Naive thymus-derived CD4-positive, alpha-beta T cell (primary cell): ENCODE measurements at regions of chr7 and their contacts with region 1.

Region 1: DNA sequence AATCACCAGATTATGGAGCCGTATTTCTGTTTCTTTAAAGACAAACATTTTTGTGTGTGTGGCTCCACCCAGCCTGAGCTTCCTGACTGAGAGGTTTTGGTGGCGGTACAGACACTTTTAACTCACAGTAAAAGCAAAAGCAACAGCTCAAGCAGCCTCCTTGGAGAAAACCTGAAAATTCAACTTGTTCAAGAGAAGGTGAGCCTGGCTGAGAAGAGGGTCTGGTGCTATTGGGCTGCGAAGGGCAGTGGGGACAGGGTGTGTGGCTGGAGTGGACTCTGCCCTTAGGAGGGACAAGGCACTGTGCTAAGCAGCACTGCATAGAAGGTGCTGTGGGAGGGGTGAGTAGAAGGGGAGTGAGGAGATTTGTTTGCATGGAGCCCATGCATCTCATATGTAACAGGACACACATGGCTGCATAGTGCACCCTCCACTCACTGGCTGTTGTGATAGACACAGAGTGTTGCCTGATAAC is at the start of gene GIMAP7:
- DNase-seq: peak; percentile 38 to 90 (median 82)
- ATAC-seq: peak; percentile 86
- H3K4me3 ChIP-seq: peak within 1 kb of the TSS; percentile 94
- H3K4me3 Mint-ChIP-seq: peak within 1 kb of the TSS; percentile 93 to 100 (median 99)
- H3K27ac ChIP-seq: peak within 1 kb of the TSS; percentile 84
- H3K27ac Mint-ChIP-seq: peak within 1 kb of the TSS; percentile 94 to 99 (median 98)
- H3K4me1 ChIP-seq: peaks cover 45% of the 10 kb centered on the region in 2 donors
- H3K4me1 Mint-ChIP-seq: peaks cover 38 to 48% (median 46%) of the 10 kb centered on the region in 7 donors
- H3K27me3 ChIP-seq: no peaks in the 10 kb centered on the region
- H3K27me3 Mint-ChIP-seq: no peaks in the 10 kb centered on the region
- total RNA-seq, gene GIMAP7: 66.3 to 555 (median 321) TPM

Region 2: GRCh38 chr7:150368096-150368883 is 146.5 kb before region 1 on chr7 and contains the start of gene REPIN1:
- CTCF ChIA-PET with region 1: no interaction called
- POLR2A ChIA-PET with region 1: interaction called, 13 read pairs
- intact Hi-C with region 1: no loop called
- DNase-seq: peak; percentile 65 to 88 (median 80)
- ATAC-seq: peak; percentile 74
- H3K4me3 ChIP-seq: peak within 1 kb of the TSS; percentile 99
- H3K4me3 Mint-ChIP-seq: peak within 1 kb of the TSS; percentile 91 to 97 (median 95)
- H3K27ac ChIP-seq: peak within 1 kb of the TSS; percentile 83
- H3K27ac Mint-ChIP-seq: peak within 1 kb of the TSS; percentile 88 to 97 (median 95)
- H3K4me1 ChIP-seq: peaks cover 11 to 39% of the 10 kb centered on the region in 2 donors
- H3K4me1 Mint-ChIP-seq: peaks cover 24 to 67% (median 58%) of the 10 kb centered on the region in 7 donors
- H3K27me3 ChIP-seq: no peaks in the 10 kb centered on the region
- H3K27me3 Mint-ChIP-seq: no peaks in the 10 kb centered on the region
- total RNA-seq, gene REPIN1: 68.5 to 103 (median 79.7) TPM

Region 3: DNA sequence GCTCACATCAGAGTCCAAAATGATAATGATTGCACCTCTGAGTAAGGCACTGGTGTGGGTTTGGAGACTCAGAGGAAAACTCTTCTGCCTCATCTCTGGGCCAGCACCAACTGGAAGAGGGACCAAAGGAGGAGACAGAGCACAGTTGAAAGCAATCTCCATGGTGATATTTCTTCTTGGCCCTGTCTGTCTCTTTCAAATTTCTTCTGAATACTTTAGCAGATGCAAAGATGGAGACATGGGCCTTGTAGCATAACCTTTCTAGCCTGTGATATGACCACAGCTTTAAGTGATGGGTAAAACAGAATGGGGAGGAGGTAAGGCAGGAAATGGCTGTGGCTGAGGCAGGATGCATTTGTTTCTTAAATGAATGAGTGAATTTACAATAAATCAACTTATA is 12.3 kb before region 1 on chr7:
- CTCF ChIA-PET with region 1: interaction called, 9 read pairs
- POLR2A ChIA-PET with region 1: interaction called, 199 read pairs
- intact Hi-C with region 1: loop called (anchors 1 kb)
- DNase-seq: peak in 7 of 9 donors; percentile 54 to 80 (median 71)
- ATAC-seq: peak; percentile 95
- H3K4me3 ChIP-seq: peak overlapping the region; percentile 15
- H3K4me3 Mint-ChIP-seq: peak overlapping the region; percentile 55 to 93 (median 70)
- H3K27ac ChIP-seq: peak overlapping the region; percentile 71
- H3K27ac Mint-ChIP-seq: peak overlapping the region; percentile 90 to 98 (median 94)
- H3K4me1 ChIP-seq: peaks cover 34 to 46% of the 10 kb centered on the region in 2 donors
- H3K4me1 Mint-ChIP-seq: peaks cover 38 to 98% (median 93%) of the 10 kb centered on the region in 7 donors
- H3K27me3 ChIP-seq: no peaks in the 10 kb centered on the region
- H3K27me3 Mint-ChIP-seq: no peaks in the 10 kb centered on the region

Region 4: GRCh38 chr7:150675714-150676113 is 160.9 kb after region 1 on chr7:
- CTCF ChIA-PET with region 1: no interaction called
- POLR2A ChIA-PET with region 1: interaction called, 21 read pairs
- intact Hi-C with region 1: loop called in 1 of 2 experiments (anchors 2 kb)
- DNase-seq: no peak
- ATAC-seq: no peak
- H3K4me3 ChIP-seq: no peak overlapping the region
- H3K4me3 Mint-ChIP-seq: peak overlapping the region in 9 of 10 donors; percentile 34 to 93 (median 76)
- H3K27ac ChIP-seq: peak overlapping the region; percentile 71
- H3K27ac Mint-ChIP-seq: peak overlapping the region; percentile 82 to 98 (median 94)
- H3K4me1 ChIP-seq: peaks cover 38 to 52% of the 10 kb centered on the region in 2 donors
- H3K4me1 Mint-ChIP-seq: peaks cover 43 to 88% (median 78%) of the 10 kb centered on the region in 7 donors
- H3K27me3 ChIP-seq: no peaks in the 10 kb centered on the region
- H3K27me3 Mint-ChIP-seq: no peaks in the 10 kb centered on the region

Region 5: DNA sequence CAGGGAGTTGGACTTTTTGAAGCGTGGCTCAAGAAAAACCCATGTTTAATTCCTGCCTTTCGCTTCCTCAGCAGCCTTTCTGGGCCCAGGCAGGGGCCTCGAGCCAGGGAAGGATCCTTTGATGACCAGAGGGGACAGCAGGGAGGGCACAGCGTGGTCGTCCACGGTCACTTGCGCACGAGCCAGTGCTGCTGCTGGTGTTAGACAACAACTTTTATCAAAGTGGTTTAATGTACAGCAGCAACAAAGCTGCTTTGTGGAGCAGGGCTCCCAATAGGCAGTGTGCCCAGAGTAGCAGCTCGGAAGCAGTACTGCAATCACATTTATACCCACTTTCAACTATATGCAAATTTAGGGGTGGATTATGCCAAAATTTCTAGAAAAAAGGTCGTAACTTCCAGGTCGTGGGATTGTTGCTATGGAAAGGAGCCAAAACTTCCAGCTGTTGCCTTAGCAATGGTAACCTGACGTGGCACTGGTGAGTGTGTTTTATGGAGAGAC is 207.7 kb after region 1 on chr7:
- CTCF ChIA-PET with region 1: no interaction called
- POLR2A ChIA-PET with region 1: interaction called, 122 read pairs
- intact Hi-C with region 1: loop called in 1 of 2 experiments (anchors 2 kb)
- DNase-seq: no peak
- ATAC-seq: no peak
- H3K4me3 ChIP-seq: peak overlapping the region; percentile 18
- H3K4me3 Mint-ChIP-seq: peak overlapping the region; percentile 72 to 98 (median 79)
- H3K27ac ChIP-seq: peak overlapping the region; percentile 65
- H3K27ac Mint-ChIP-seq: peak overlapping the region in 8 of 9 donors; percentile 14 to 89 (median 80)
- H3K4me1 ChIP-seq: peaks cover 39 to 43% of the 10 kb centered on the region in 2 donors
- H3K4me1 Mint-ChIP-seq: peaks cover 45 to 86% (median 78%) of the 10 kb centered on the region in 7 donors
- H3K27me3 ChIP-seq: no peaks in the 10 kb centered on the region
- H3K27me3 Mint-ChIP-seq: no peaks in the 10 kb centered on the region